Esophagus squamous epithelium (tissue), 5 donors: ENCODE measurements at regions of chr1 and their contacts with region 1.

Region 1: GRCh38 chr1:27284425-27285273 is 37.3 kb upstream of the TMEM222 start:
- DNase-seq: peak; percentile 21
- H3K4me3 ChIP-seq: no peak overlapping the region
- H3K27ac ChIP-seq: no peak overlapping the region
- H3K4me1 ChIP-seq: no peaks in the 10 kb centered on the region
- H3K27me3 ChIP-seq: no peaks in the 10 kb centered on the region
- CTCF ChIP-seq: peak; percentile 67 to 84 (median 80)
- POLR2A ChIP-seq: no peak

Region 2: DNA sequence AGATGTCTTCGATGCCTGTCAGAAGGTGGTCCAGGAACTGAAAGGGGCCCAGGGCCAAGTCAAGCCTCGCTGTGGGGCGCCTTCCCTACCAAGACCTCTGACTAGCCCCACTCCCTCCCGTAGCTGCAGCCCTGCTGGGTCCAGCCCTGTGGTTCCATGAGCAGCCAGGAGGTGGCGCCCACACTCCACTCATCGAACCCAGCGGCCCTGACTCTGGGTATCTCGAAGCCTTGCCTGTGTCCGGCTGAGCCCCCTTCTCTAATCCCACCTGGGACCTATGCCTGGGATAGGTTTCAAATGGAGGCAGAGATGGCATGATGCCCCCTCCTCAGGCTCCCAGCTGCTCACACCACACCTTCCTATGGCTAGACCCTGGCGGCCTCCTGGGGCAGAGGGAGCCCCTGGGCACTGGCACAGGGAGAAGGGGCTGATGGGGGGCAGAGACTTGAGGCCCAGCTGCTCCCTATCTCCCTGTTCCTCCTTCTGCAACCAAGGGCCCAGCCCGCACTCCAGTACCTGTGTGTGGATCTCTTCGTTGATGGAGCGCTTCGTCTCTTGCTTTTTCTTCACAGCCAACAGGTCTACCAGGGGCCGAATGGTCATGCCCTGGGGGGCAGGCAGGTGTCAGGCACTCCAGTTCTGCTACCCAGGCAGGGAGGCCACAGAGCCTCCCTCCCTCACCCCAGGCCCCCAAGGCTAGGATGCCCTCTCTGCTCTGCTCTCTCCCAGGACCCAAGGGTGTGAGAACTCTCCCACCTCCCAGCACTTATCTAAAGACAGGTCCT is 181.8 kb before region 1 on chr1:
- intact Hi-C with region 1: loop called (anchors 5 kb)
- DNase-seq: no peak
- H3K4me3 ChIP-seq: no peak overlapping the region
- H3K27ac ChIP-seq: no peak overlapping the region
- H3K4me1 ChIP-seq: peaks cover 23 to 35% (median 23%) of the 10 kb centered on the region in 3 donors
- H3K27me3 ChIP-seq: no peaks in the 10 kb centered on the region
- CTCF ChIP-seq: peak; percentile 93 to 98 (median 97)
- POLR2A ChIP-seq: no peak

Region 3: GRCh38 chr1:27192039-27192529 is 92.6 kb before region 1 on chr1:
- intact Hi-C with region 1: loop called (anchors 10 kb)
- DNase-seq: no peak
- H3K4me3 ChIP-seq: no peak overlapping the region
- H3K27ac ChIP-seq: peak overlapping the region; percentile 51 to 76 (median 60)
- H3K4me1 ChIP-seq: peaks cover 0 to 21% (median 7%) of the 10 kb centered on the region in 3 donors
- H3K27me3 ChIP-seq: no peaks in the 10 kb centered on the region
- CTCF ChIP-seq: no peak
- POLR2A ChIP-seq: no peak

Region 4: GRCh38 chr1:27383039-27383605 is 98.5 kb after region 1 on chr1 and contains the start of gene CD164L2:
- intact Hi-C with region 1: no loop called
- DNase-seq: no peak
- H3K4me3 ChIP-seq: peak within 1 kb of the TSS; percentile 51 to 64 (median 56)
- H3K27ac ChIP-seq: peak within 1 kb of the TSS; percentile 78 to 87 (median 84)
- H3K4me1 ChIP-seq: peaks cover 26 to 56% (median 31%) of the 10 kb centered on the region in 3 donors
- H3K27me3 ChIP-seq: peaks cover 0 to 12% (median 0%) of the 10 kb centered on the region in 4 donors
- CTCF ChIP-seq: no peak
- POLR2A ChIP-seq: peak in 1 of 4 donors; percentile 27
- total RNA-seq, gene CD164L2: 4.8 to 15.4 (median 6.5) TPM